Psoas muscle (tissue), 8 donors: ENCODE measurements at regions of chr19 and their contacts with region 1.

Region 1: DNA sequence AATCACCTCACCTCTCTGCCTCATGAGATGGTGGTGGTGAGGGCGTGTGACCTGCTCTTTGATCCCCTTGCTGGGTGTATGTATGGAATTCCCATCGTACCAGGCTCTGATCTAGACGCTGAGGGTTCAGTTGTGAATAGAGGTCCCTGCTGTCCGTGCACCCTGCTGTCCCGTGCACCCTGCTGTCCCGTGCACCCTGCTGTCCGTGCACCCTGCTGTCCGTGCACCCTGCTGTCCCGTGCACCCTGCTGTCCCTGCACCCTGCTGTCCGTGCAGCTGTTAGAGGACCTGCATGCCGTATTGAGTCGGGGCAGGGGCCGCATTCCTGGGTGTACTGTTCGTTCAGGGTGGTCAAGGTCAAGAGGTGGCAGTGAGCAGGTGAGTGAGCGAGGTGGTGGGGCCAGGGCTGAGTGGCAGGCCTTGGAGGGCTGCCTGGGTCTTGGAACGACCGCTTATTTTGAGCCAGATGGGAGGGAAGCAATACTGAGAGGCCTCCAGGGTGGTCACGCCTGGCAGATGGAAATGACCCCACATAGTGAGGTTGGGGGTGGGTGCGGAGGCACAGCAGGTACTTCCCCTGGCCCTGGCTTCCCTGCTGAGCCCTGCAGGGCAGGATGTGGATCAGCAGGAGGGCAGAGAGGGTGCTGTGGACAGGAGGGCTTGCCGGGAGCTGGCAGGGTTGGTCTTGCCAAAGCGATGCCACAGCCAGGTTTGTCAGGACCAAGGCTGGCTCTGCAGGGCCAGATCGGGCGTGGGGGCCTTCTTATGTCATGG is 4.6 kb upstream of the EPN1 start:
- DNase-seq: no peak
- ATAC-seq: no peak
- H3K4me3 ChIP-seq: no peak overlapping the region
- H3K27ac ChIP-seq: no peak overlapping the region
- H3K4me1 ChIP-seq: peaks cover 5% of the 10 kb centered on the region
- H3K27me3 ChIP-seq: no peaks in the 10 kb centered on the region
- CTCF ChIP-seq: no peak

Region 2: GRCh38 chr19:55653758-55654539 is 16.5 kb before region 1 on chr19:
- intact Hi-C with region 1: loop called in 1 of 2 experiments (anchors 2 kb)
- DNase-seq: peak; percentile 99 to 100
- ATAC-seq: peak; percentile 81 to 85 (median 84)
- H3K4me3 ChIP-seq: peak overlapping the region; percentile 71
- H3K27ac ChIP-seq: peak overlapping the region; percentile 91
- H3K4me1 ChIP-seq: peaks cover 37% of the 10 kb centered on the region
- H3K27me3 ChIP-seq: no peaks in the 10 kb centered on the region
- CTCF ChIP-seq: peak; percentile 97